ENCODE measurements at regions of chr15 and their contacts with region 1.

Region 1: DNA sequence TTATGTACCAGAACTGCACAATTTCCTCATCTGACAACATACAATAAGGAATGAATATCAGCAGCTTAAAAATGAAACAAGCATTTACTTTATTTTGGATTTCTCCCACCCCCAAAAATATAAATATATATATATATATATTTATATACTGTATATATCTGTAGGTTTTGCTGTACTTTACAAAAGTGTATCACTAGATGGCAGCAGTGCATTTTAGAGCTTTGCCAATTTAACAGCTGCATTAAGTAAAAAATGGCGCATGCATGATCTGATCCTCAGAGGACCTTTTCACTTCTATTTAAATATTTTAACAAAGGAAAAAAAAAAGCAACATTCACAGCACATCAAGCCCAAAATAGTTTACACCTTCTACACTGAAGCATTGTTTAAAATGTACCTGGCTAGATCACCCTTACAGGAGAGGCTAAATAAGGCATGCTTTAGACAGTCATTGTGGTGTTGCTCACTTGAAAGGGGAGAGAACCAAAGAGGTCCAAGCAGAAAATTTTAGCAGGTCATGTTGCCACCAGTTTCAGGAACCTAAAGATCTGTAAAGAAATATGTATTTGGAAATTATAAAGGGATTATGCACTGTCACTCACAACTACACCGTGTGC is 72.6 kb downstream of the NPTN start:
- DNase-seq: no peak
- H3K4me3 ChIP-seq: no peak overlapping the region
- H3K27ac ChIP-seq: no peak overlapping the region
- H3K4me1 ChIP-seq: peaks cover 0 to 16% of the 10 kb centered on the region in 2 donors
- H3K27me3 ChIP-seq: no peaks in the 10 kb centered on the region
- CTCF ChIP-seq: peak in 4 of 6 experiments; percentile 27 to 58 (median 36)
- POLR2A ChIP-seq: no peak

Region 2: GRCh38 chr15:73265536-73266153 is 295.0 kb before region 1 on chr15:
- intact Hi-C with region 1: no loop called
- DNase-seq: peak in 1 of 2 donors; percentile 25
- H3K4me3 ChIP-seq: no peak overlapping the region
- H3K27ac ChIP-seq: peak overlapping the region in 2 of 3 donors; percentile 68 to 89
- H3K4me1 ChIP-seq: peaks cover 25 to 34% of the 10 kb centered on the region in 2 donors
- H3K27me3 ChIP-seq: no peaks in the 10 kb centered on the region
- CTCF ChIP-seq: peak in 5 of 6 experiments; percentile 8 to 42 (median 17)
- POLR2A ChIP-seq: no peak

Region 3: GRCh38 chr15:73318463-73319351 is 241.9 kb before region 1 on chr15:
- intact Hi-C with region 1: no loop called
- DNase-seq: no peak
- H3K4me3 ChIP-seq: no peak overlapping the region
- H3K27ac ChIP-seq: no peak overlapping the region
- H3K4me1 ChIP-seq: no peaks in the 10 kb centered on the region
- H3K27me3 ChIP-seq: no peaks in the 10 kb centered on the region
- CTCF ChIP-seq: no peak
- POLR2A ChIP-seq: no peak

Region 4: DNA sequence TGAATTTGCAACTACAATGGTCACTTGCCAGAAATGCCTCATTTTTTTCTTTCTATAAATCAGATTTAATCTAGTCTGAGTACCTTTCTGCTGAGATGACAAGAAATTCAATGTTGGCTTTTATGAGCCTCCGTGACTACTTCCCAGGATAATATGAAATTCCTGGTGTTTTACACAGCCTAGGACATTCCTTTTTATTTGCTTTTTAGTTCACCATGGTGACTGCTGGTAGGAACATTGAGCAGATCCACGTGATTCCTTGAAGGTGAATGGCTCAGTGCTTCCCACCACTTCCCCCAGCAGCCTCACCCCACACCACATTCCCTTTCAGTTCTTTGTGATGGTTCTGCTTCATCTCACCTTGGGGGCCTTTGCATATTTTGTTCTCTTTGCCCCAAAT is 76.9 kb after region 1 on chr15:
- intact Hi-C with region 1: loop called (anchors 5 kb)
- DNase-seq: peak in 1 of 2 donors; percentile 25
- H3K4me3 ChIP-seq: no peak overlapping the region
- H3K27ac ChIP-seq: no peak overlapping the region
- H3K4me1 ChIP-seq: peaks cover 4 to 7% of the 10 kb centered on the region in 2 donors
- H3K27me3 ChIP-seq: no peaks in the 10 kb centered on the region
- CTCF ChIP-seq: no peak
- POLR2A ChIP-seq: no peak

Region 5: DNA sequence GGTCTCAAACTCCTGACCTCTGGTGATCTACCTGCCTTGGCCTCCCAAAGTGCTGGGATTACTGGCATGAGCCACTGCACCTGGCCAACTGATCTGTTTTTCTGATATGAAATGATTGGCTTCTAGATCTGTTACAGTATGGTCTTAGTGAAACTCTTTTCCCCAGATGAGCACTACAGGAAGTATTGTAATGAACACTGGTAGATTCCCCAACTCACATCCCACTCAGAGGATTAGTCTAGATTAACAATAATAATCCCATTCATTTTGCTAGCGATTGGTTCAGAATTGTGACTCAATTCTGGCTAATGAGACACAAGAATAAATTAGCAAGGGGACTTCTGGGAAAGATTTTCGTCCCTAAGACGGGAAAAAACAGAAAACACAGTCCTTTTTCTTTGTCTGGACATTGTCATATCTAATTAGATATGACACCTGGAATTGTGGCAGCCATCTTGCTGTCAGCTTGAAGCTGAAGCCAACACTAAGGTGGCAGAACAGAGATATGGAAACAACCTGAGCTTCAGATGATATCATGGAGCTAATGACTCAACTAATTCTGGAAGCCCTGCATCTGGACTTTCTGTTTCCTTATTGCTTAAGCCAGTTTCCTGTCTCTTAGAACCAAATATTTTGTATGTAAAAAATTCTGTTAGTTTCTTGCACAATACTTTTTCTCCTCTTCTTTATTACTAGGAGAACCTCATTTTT is 90.0 kb after region 1 on chr15:
- intact Hi-C with region 1: no loop called
- DNase-seq: no peak
- H3K4me3 ChIP-seq: no peak overlapping the region
- H3K27ac ChIP-seq: no peak overlapping the region
- H3K4me1 ChIP-seq: no peaks in the 10 kb centered on the region
- H3K27me3 ChIP-seq: no peaks in the 10 kb centered on the region
- CTCF ChIP-seq: no peak
- POLR2A ChIP-seq: no peak